Astrocyte of the cerebellum (primary cell): ENCODE measurements at regions of chr12 and their contacts with region 1.

Region 1: GRCh38 chr12:49515266-49515665 is 23.6 kb upstream of the KCNH3 start:
- DNase-seq: peak; percentile 73
- H3K4me3 ChIP-seq: no peak overlapping the region
- CTCF ChIP-seq: no peak

Region 2: DNA sequence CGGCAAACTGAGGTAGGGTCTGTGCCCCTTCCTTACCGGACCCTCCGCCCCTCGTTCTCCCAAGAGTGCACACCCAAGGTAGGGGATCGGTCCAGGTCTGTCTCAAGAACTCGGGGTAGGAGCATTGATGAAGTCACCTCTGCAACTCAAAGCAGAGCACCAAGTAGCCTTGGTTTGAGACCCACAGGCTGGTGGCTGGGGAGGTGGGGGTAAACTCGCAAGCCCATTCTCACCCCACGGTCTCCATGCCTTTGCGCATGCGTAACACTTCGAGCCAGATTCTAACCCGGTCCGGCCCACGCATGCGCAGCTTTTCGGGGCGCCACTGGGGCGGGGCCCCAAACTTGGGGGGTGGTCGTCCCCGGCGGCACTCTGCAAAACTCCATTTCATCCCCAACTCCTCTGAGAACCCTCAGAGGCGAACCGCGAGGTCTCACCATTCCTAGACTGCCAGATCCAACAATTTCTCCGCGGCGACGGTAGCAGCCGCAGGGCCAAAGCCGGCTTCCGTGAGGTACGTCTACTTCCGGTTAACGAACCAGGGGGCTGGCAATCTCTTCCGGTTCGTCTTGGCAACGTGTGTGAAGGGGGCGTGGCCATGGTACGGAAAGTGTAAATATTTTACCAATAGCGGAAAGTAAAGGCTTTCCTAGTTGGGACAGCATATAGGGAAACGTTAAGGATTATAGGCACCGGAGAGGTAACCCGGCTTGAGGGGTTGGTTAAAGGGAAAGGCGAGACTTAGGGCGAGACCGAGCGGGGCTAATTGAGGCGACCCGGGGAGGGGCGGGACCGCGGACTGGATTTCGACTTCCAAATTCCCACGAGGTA is 52.6 kb after region 1 on chr12 and contains the start of gene MCRS1:
- in situ Hi-C with region 1: loop called (anchors 5 kb)
- DNase-seq: peak; percentile 83
- H3K4me3 ChIP-seq: peak within 1 kb of the TSS; percentile 99
- CTCF ChIP-seq: no peak